PC-3 (cell line): ENCODE measurements at regions of chr12 and their contacts with region 1.

Region 1: DNA sequence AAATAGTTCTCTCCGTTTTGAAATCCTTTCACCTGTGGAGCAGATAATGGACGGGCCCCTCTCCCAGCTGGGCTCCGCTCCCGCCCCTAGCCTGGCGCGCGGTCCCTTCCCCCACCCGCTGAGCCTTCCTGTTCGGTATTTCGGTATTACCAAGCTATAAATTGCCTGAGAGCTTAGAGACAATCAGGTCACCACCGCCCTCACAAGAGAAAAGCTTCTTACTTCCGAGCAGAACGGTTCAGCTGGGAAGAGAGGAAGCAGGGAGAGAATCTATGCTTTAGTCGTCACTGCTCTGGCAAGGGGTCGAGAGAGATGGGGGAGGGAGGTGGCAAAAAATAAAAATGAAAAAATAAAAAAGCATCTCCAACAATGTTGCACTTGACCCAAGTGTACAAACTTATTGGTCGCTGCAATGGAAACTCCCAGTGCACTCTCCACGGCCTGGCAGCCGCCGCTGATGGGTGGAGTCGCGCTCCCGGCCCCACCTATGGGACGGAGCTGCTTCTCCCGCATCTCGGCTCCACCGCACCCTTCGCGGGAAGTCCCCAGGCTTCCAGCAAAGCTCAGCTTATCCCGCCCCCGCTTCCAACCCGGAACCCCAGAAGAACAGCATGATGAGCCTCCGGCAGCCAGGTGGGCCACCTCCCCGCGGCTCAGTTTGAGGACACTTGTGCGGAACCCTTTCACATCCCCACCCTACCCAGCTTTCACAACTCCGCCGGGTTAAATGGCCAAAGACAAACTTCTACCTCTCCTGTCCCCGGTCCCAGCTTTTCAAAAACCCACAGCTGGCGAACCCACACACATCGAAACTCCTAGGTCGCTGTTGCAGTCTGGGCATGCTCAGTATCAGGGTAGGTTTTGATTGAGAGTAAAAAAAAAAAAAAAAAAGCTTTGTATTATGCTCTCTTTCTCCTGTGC is 832 bp upstream of the SYT1 start:
- DNase-seq: peak; percentile 53
- ATAC-seq: peak; percentile 73
- H3K4me3 ChIP-seq: peak overlapping the region; percentile 79
- H3K27ac ChIP-seq: no peak overlapping the region
- H3K4me1 ChIP-seq: no peaks in the 10 kb centered on the region
- H3K27me3 ChIP-seq: peaks cover 6% of the 10 kb centered on the region
- CTCF ChIP-seq: no peak

Region 2: DNA sequence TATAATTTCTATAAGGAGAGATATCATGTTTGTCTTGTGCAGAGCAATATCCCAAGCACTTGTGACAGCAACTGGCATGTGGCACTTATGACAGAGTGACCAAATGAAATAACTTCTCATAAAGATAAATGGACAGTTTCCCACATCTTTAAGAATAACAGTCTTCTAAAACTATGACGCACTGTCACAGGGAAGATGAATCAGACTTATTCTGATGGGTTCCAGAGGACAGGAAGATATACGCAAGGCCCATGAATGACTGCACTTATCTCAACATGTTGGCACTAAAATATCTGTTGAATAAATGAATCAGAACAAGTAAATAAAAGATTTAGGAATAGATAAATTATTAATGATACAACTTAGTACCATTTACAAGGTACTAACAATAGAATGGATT is 465.0 kb before region 1 on chr12:
- CTCF ChIA-PET with region 1: no interaction called
- POLR2A ChIA-PET with region 1: no interaction called
- intact Hi-C with region 1: loop called (anchors 5 kb)
- DNase-seq: peak; percentile 85
- ATAC-seq: peak; percentile 79
- H3K4me3 ChIP-seq: no peak overlapping the region
- H3K27ac ChIP-seq: peak overlapping the region; percentile 92
- H3K4me1 ChIP-seq: peaks cover 30% of the 10 kb centered on the region
- H3K27me3 ChIP-seq: no peaks in the 10 kb centered on the region
- CTCF ChIP-seq: no peak

Region 3: GRCh38 chr12:78641837-78642423 is 221.8 kb before region 1 on chr12:
- CTCF ChIA-PET with region 1: interaction called, 10 read pairs
- POLR2A ChIA-PET with region 1: interaction called, 3 read pairs
- intact Hi-C with region 1: loop called (anchors 5 kb)
- DNase-seq: peak; percentile 40
- ATAC-seq: peak; percentile 83
- H3K4me3 ChIP-seq: no peak overlapping the region
- H3K27ac ChIP-seq: no peak overlapping the region
- H3K4me1 ChIP-seq: no peaks in the 10 kb centered on the region
- H3K27me3 ChIP-seq: no peaks in the 10 kb centered on the region
- CTCF ChIP-seq: peak; percentile 48; the same call in 1 of the 2 replicates